ENCODE measurements at regions of chr5 and their contacts with region 1.

Region 1: GRCh38 chr5:174925586-174925985 is 201.2 kb downstream of the MSX2 start:
- DNase-seq: no peak
- H3K4me3 ChIP-seq: no peak overlapping the region
- H3K27ac ChIP-seq: no peak overlapping the region
- H3K4me1 ChIP-seq: no peaks in the 10 kb centered on the region
- H3K27me3 ChIP-seq: no peaks in the 10 kb centered on the region
- CTCF ChIP-seq: no peak

Region 2: DNA sequence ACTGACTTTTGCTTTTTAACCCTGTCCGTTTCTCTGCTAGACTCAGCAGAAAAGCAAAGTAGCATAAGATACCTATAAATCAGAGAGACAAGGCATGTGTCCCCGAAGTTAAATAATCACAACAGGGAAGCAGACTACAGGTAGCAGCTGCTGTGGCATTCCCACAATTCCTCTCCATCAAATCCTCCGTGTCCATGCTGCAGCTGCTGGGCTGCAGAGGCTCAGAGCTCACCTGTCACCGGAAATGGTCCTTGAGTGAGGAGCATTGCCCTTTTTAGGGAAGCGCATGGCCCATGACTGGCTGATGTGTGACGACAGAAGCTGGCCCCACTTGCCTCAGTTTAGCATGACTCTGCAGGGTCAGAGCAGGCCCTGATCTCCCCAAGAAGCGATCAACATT is 76.2 kb before region 1 on chr5:
- CTCF ChIA-PET with region 1: no interaction called
- dilution Hi-C with region 1: no loop called
- in situ Hi-C with region 1: no loop called
- intact Hi-C with region 1: no loop called
- DNase-seq: no peak
- H3K4me3 ChIP-seq: no peak overlapping the region
- H3K27ac ChIP-seq: no peak overlapping the region
- H3K4me1 ChIP-seq: no peaks in the 10 kb centered on the region
- H3K27me3 ChIP-seq: no peaks in the 10 kb centered on the region
- CTCF ChIP-seq: no peak

Region 3: GRCh38 chr5:175464074-175464941 is 538.7 kb after region 1 on chr5:
- CTCF ChIA-PET with region 1: interaction called, 18 read pairs
- dilution Hi-C with region 1: no loop called
- in situ Hi-C with region 1: no loop called
- intact Hi-C with region 1: no loop called
- DNase-seq: peak; percentile 40
- H3K4me3 ChIP-seq: no peak overlapping the region
- H3K27ac ChIP-seq: no peak overlapping the region
- H3K4me1 ChIP-seq: peaks cover 12% of the 10 kb centered on the region
- H3K27me3 ChIP-seq: no peaks in the 10 kb centered on the region
- CTCF ChIP-seq: peak; percentile 48 to 70

Measured in mammary epithelial cell (primary cell).